ENCODE measurements at regions of chr14 and their contacts with region 1.

Region 1: GRCh38 chr14:75709207-75709812 is 48.3 kb downstream of the TTLL5 start:
- DNase-seq: peak; percentile 58 to 82
- ATAC-seq: peak; percentile 88

Region 2: GRCh38 chr14:75591331-75591946 is 117.9 kb before region 1 on chr14:
- intact Hi-C with region 1: no loop called
- DNase-seq: no peak
- ATAC-seq: no peak

Region 3: DNA sequence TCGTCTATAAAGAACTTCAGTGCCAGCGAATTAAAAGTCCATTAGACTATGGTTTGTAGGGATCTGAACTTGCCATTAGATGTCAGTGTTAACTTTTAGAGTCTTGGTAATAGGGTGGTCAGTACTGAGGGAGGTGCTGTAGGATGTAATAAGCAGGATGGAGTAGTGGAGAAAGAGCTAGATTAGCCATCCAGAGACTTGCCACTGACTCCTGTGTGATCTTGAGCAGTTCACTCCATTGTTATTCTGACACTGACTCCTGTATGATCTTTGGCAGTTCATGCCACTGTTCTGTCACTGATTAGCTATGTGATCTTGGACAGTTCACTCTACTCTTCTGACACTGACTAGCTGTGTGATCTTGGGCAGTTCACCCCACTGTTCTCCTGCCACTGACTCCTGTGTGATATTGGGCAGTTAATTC is 85.3 kb after region 1 on chr14:
- intact Hi-C with region 1: loop called in 1 of 2 experiments (anchors 5 kb)
- DNase-seq: no peak
- ATAC-seq: peak; percentile 70

Measured in left colon (tissue), 2 donors.